ENCODE measurements at regions of chr11 and their contacts with region 1.

Region 1: DNA sequence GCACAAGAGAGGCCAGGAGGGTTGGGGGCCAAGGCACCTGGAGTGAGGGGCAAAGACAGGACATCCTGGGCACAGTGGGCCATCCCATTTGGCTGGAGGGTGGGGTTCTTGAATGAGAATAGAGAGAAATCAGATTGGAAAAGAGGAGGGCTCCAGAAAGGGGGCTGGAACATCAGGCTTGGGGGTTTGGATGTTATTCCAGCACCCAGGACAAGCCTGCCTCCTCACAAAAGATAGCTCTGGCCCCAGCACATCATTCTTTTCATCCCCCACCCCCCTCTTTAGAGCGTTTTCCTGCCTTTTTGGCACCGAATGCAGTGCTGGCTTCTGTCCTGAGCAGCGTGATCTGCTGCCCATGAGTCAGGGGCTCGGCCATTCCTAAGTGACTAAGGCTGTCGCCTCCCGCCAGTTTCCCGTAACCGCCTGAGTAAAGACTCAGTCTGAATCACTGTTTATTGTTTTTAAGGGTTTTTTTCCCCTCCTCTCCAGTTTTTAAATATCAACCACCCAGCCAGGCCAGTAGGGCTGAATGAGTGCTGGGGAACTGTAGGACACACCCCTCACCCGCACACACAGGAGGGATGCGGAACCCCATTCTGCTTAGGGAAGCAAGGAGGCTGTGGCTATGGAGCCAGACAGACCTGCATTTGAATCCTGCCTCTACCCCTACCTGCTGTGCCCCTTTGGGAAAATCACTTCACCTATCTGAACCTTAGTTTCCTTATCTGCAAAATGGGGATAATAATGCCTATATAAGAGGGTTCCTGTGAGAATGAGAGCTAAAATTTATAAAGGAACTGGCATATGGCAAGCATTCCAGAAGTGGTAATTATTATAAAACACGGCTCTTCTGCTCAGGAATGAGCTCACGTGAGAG is 32.4 kb upstream of the NAV2 start:
- DNase-seq: peak; percentile 97
- H3K4me3 Mint-ChIP-seq: peak overlapping the region; percentile 38
- H3K27ac Mint-ChIP-seq: peak overlapping the region; percentile 80
- H3K4me1 Mint-ChIP-seq: peaks cover 41% of the 10 kb centered on the region
- H3K27me3 Mint-ChIP-seq: no peaks in the 10 kb centered on the region
- CTCF ChIP-seq: no peak

Region 2: GRCh38 chr11:19432370-19433061 is 247.7 kb before region 1 on chr11:
- CTCF ChIA-PET with region 1: no interaction called
- POLR2A ChIA-PET with region 1: no interaction called
- intact Hi-C with region 1: loop called (anchors 10 kb)
- DNase-seq: peak; percentile 88
- H3K4me3 Mint-ChIP-seq: no peak overlapping the region
- H3K27ac Mint-ChIP-seq: no peak overlapping the region
- H3K4me1 Mint-ChIP-seq: peaks cover 16% of the 10 kb centered on the region
- H3K27me3 Mint-ChIP-seq: peaks cover 40% of the 10 kb centered on the region
- CTCF ChIP-seq: no peak

Region 3: GRCh38 chr11:19472679-19473078 is 207.5 kb before region 1 on chr11:
- CTCF ChIA-PET with region 1: no interaction called
- POLR2A ChIA-PET with region 1: no interaction called
- intact Hi-C with region 1: no loop called
- DNase-seq: no peak
- H3K4me3 Mint-ChIP-seq: no peak overlapping the region
- H3K27ac Mint-ChIP-seq: no peak overlapping the region
- H3K4me1 Mint-ChIP-seq: no peaks in the 10 kb centered on the region
- H3K27me3 Mint-ChIP-seq: peaks cover 88% of the 10 kb centered on the region
- CTCF ChIP-seq: no peak

Region 4: DNA sequence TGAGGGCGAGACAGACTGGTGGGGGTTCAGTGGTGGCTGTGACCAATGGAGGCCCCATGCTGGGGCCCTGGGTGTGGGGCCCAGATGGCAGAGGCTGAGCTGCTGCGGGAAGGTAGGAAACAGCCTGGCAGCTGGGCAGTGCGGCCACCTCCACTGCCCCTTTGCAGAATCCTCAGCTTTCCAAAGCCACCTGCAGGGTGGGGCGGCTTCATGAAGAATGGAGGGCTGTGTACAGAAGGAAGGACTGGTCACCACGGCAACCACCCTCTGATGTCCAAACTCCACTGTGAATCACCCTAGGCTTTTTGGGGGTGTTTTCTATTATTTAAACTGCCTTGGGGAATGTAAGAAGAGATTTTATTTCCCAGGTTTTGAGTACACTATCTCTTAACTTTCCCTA is 133.9 kb before region 1 on chr11:
- CTCF ChIA-PET with region 1: no interaction called
- POLR2A ChIA-PET with region 1: no interaction called
- intact Hi-C with region 1: no loop called
- DNase-seq: no peak
- H3K4me3 Mint-ChIP-seq: no peak overlapping the region
- H3K27ac Mint-ChIP-seq: no peak overlapping the region
- H3K4me1 Mint-ChIP-seq: no peaks in the 10 kb centered on the region
- H3K27me3 Mint-ChIP-seq: peaks cover 98% of the 10 kb centered on the region
- CTCF ChIP-seq: no peak

Region 5: DNA sequence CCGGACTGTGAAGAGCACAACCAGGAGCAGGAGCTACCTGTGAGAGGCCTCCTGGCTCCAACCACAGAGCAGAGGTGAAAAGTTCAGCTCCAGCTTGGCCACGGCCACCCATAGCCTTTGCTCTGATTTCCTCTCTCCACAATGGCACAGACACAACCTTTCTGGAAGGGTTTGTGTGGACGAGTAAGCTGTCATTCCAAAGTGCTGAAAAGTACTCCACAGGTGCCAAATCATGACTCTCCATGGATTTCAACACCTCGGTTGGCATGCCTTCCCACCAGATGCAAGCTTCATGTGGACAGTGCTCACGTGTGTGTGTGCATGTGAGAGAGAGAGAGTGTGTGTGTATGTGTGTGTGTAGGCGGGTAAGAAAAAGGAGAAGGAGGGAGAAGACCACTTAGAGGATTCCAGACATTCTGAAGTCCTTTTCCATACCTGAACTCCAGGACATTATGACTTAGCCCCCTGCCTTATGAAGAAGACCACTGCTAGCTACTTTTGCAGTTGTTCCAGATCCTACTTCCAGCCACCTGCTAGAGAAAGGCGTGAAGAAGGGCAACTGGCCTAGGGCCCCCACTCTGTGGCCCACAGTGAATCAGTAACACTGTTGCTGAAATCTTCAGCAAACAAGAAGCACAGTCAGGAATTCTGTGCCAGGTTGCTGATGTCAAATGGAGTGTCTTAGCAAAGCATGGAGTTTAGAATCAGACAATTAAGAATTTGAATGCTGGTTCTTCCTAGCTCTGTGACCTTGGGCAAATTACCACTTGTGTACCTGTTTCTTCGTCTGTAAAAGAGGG is 18.5 kb after region 1 on chr11:
- CTCF ChIA-PET with region 1: interaction called, 3 read pairs
- POLR2A ChIA-PET with region 1: interaction called, 17 read pairs
- intact Hi-C with region 1: no loop called
- DNase-seq: peak; percentile 98
- H3K4me3 Mint-ChIP-seq: no peak overlapping the region
- H3K27ac Mint-ChIP-seq: peak overlapping the region; percentile 21
- H3K4me1 Mint-ChIP-seq: peaks cover 27% of the 10 kb centered on the region
- H3K27me3 Mint-ChIP-seq: no peaks in the 10 kb centered on the region
- CTCF ChIP-seq: no peak

Measured in MCF 10A (cell line).